GM23248 (cell line): ENCODE measurements at regions of chr1 and their contacts with region 1.

Region 1: DNA sequence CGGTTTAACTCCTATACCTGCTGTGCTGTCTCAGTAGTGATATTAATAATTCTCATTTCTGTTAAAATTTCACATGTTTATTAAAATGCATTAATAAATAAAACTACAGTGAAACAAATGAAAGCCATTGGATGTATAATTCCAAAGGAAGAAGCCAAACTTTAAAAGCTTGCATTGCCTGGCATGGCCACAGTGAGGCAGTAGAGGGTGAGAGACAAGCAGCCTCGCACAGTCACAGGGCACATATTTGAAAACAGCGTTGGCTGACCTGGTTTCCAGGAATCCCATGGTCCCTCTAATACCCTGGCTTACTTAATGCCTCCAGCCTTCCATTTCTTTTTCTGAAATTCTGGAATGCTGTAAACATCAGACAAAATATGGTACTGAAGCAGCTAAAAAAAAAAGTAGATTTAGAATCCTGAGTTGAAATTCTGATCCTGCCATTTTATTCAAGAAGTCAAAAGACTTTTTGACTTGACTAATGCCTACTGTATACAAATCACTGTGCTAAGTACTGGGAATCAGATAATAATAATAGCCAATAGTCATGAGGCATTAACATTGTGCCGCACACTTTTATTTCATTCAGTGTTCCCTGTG is 6.7 kb upstream of the RNASEL start:
- DNase-seq: peak; percentile 78
- H3K4me3 ChIP-seq: no peak overlapping the region
- H3K27ac ChIP-seq: no peak overlapping the region
- H3K4me1 ChIP-seq: peaks cover 11% of the 10 kb centered on the region
- H3K27me3 ChIP-seq: no peaks in the 10 kb centered on the region

Region 2: DNA sequence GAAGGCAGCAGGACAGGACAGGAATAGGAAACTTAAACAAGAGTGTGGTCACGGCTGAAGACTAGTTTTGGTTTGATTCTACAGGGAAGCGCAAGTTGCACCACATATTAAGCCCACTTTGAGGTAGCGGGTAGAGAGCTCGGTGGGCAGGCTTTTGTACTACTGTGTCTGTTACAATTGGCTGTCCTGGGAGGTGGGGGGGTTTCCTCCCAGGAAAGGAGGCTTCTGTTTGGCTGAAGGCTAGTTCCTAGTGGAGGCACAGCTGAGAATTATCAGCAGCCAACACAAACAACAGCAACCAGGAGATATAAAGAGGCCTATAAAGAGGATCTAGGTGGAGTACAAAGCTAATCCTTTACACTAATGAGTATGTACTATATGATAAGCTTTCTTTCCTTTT is 596.9 kb before region 1 on chr1:
- in situ Hi-C with region 1: no loop called
- DNase-seq: no peak
- H3K4me3 ChIP-seq: no peak overlapping the region
- H3K27ac ChIP-seq: no peak overlapping the region
- H3K4me1 ChIP-seq: no peaks in the 10 kb centered on the region
- H3K27me3 ChIP-seq: no peaks in the 10 kb centered on the region

Region 3: GRCh38 chr1:182446033-182446669 is 149.6 kb before region 1 on chr1:
- in situ Hi-C with region 1: loop called (anchors 10 kb)
- DNase-seq: peak; percentile 67
- H3K4me3 ChIP-seq: no peak overlapping the region
- H3K27ac ChIP-seq: no peak overlapping the region
- H3K4me1 ChIP-seq: no peaks in the 10 kb centered on the region
- H3K27me3 ChIP-seq: peaks cover 9% of the 10 kb centered on the region; the same call in 1 of the 2 replicates

Region 4: GRCh38 chr1:182484591-182485257 is 111.0 kb before region 1 on chr1:
- in situ Hi-C with region 1: no loop called
- DNase-seq: no peak
- H3K4me3 ChIP-seq: no peak overlapping the region
- H3K27ac ChIP-seq: no peak overlapping the region
- H3K4me1 ChIP-seq: no peaks in the 10 kb centered on the region
- H3K27me3 ChIP-seq: no peaks in the 10 kb centered on the region; the same call in 1 of the 2 replicates

Region 5: DNA sequence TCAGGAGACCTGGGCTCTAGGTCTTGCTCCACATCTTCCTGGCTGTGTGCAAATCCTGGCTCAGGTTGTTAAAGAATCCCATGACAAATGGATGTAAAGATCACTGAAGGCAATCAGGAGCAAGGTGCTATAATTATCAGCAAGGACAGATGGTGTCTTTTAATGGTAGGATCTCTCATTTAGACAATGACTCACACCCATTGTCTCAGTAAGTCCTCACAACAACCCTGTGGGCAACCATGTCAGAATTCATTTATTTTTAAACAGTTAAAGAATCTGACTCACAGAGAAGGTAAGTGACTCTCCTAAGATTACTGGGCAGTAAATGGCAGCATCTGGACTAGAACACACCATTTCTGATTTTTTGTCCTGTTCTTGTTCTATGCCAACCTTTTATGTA is 39.5 kb before region 1 on chr1:
- in situ Hi-C with region 1: no loop called
- DNase-seq: peak; percentile 19
- H3K4me3 ChIP-seq: no peak overlapping the region
- H3K27ac ChIP-seq: no peak overlapping the region
- H3K4me1 ChIP-seq: no peaks in the 10 kb centered on the region
- H3K27me3 ChIP-seq: no peaks in the 10 kb centered on the region

Region 6: GRCh38 chr1:182781841-182782586 is 186.3 kb after region 1 on chr1:
- in situ Hi-C with region 1: loop called (anchors 5 kb)
- DNase-seq: peak; percentile 75
- H3K4me3 ChIP-seq: no peak overlapping the region
- H3K27ac ChIP-seq: no peak overlapping the region
- H3K4me1 ChIP-seq: no peaks in the 10 kb centered on the region
- H3K27me3 ChIP-seq: no peaks in the 10 kb centered on the region